Activated naive CD4-positive, alpha-beta T cell treated with anti-CD3 and anti-CD28 coated beads for 36 hours (primary cell): ENCODE measurements at regions of chr2 and their contacts with region 1.

Region 1: DNA sequence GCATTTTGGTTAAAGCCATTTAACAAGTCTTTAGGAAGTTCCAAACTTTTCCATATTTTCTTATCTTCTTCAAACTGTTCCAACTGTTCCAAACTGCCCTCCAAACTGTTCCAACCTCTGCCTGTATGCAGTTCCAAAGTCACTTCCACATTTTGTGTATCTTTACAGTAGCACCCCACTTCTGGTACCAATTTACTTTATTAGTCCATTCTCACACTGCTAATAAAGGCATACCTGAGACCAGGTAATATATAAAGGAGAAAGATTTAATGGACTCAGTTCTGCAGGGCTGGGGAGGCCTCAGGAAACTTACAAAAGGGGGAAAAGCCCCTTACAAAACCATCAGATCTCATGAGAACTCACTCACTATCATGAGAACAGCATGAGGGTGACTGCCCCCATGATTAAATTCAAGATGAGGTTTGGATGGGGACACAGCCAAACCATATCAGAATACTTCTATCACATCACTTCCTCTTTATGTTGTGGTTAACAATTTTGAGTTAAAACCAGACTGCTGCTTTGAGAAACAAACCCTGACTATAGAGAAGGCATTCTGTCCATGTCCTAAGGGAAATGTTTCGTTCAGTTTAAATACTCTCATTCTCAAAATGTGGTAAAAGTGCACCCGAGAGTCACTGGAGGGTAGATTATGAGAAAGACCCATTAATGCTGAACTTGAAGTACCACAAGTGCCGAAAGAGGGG is 11.0 kb downstream of the IL18R1 start:
- DNase-seq: peak; percentile 52
- H3K4me3 Mint-ChIP-seq: peak overlapping the region; percentile 20
- H3K27ac Mint-ChIP-seq: peak overlapping the region; percentile 94
- H3K4me1 Mint-ChIP-seq: peaks cover 80% of the 10 kb centered on the region
- H3K27me3 Mint-ChIP-seq: no peaks in the 10 kb centered on the region

Region 2: DNA sequence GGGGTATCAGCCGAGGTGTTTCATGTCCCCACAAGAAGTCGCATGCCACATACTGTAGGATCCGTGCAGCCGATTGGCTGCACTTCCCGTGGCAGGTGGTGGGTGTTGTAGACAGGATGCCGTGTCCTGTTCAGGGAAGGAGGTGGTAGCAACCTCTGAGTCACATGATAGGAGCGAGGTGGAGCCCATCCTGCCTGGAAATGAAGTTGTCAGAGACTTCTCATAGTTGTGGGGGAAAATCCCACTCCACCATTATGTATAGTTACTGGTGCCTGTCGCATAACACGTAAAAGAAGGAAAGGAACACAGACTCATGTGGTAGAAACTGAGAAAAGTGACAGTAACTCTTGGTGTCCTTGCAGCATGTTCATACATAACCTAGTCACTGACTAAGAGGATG is 466.2 kb before region 1 on chr2:
- CTCF ChIA-PET with region 1: no interaction called
- intact Hi-C with region 1: loop called (anchors 5 kb)
- DNase-seq: peak; percentile 87
- H3K4me3 Mint-ChIP-seq: no peak overlapping the region
- H3K27ac Mint-ChIP-seq: peak overlapping the region; percentile 87
- H3K4me1 Mint-ChIP-seq: peaks cover 33% of the 10 kb centered on the region
- H3K27me3 Mint-ChIP-seq: peaks cover 2% of the 10 kb centered on the region

Region 3: GRCh38 chr2:102126651-102127050 is 239.9 kb before region 1 on chr2:
- CTCF ChIA-PET with region 1: no interaction called
- intact Hi-C with region 1: loop called (anchors 1 kb)
- DNase-seq: no peak
- H3K4me3 Mint-ChIP-seq: no peak overlapping the region
- H3K27ac Mint-ChIP-seq: peak overlapping the region; percentile 81
- H3K4me1 Mint-ChIP-seq: peaks cover 31% of the 10 kb centered on the region
- H3K27me3 Mint-ChIP-seq: peaks cover 3% of the 10 kb centered on the region

Region 4: DNA sequence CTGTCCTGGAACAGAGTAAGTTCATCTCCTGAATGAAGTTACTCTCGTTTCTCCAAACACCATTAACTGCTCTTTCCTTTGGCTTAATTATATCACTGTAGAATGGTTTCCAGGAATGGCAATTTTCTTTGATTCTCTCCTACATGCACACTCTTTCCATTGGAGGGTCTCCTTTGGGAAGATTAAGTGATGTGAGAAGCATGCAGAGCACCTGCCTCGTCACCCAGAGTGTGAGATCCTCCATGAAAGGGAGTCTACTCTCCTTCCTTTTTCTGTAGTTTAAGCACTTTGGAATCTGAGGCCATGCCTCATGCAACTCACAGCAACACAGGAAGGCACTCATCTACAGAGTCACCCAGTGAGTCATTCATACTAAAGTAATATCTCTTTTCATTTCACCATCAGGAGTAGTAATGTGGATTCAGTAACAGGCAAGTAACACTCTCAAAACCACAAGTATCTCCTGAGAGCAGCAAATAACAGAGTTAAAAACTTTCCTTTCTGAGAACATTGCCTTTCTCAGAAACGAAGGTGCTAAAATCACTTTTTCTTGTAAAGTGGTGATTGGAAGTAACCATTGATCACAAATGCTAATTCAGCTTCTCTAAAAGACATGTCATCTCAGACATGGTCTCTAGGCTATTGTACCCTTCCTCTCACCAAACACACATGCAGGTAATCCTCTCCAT is 108.0 kb before region 1 on chr2:
- CTCF ChIA-PET with region 1: no interaction called
- intact Hi-C with region 1: loop called (anchors 1 kb)
- DNase-seq: peak; percentile 71
- H3K4me3 Mint-ChIP-seq: no peak overlapping the region
- H3K27ac Mint-ChIP-seq: peak overlapping the region; percentile 95
- H3K4me1 Mint-ChIP-seq: peaks cover 46% of the 10 kb centered on the region
- H3K27me3 Mint-ChIP-seq: no peaks in the 10 kb centered on the region

Region 5: GRCh38 chr2:102418421-102418961 is 51.9 kb after region 1 on chr2:
- CTCF ChIA-PET with region 1: interaction called, 10 read pairs
- intact Hi-C with region 1: loop called (anchors 1 kb)
- DNase-seq: no peak
- H3K4me3 Mint-ChIP-seq: peak overlapping the region; percentile 75
- H3K27ac Mint-ChIP-seq: peak overlapping the region; percentile 92
- H3K4me1 Mint-ChIP-seq: peaks cover 57% of the 10 kb centered on the region
- H3K27me3 Mint-ChIP-seq: no peaks in the 10 kb centered on the region

Region 6: GRCh38 chr2:102664471-102664909 is 297.9 kb after region 1 on chr2:
- CTCF ChIA-PET with region 1: no interaction called
- intact Hi-C with region 1: loop called (anchors 5 kb)
- DNase-seq: peak; percentile 82
- H3K4me3 Mint-ChIP-seq: no peak overlapping the region
- H3K27ac Mint-ChIP-seq: peak overlapping the region; percentile 10
- H3K4me1 Mint-ChIP-seq: peaks cover 38% of the 10 kb centered on the region
- H3K27me3 Mint-ChIP-seq: no peaks in the 10 kb centered on the region